GM13976 (cell line): ENCODE measurements at regions of chr14 and their contacts with region 1.

Region 1: GRCh38 chr14:51776102-51776894 is 84.1 kb upstream of the GNG2 start:
- DNase-seq: peak; percentile 77
- CTCF ChIP-seq: peak; percentile 52

Region 2: DNA sequence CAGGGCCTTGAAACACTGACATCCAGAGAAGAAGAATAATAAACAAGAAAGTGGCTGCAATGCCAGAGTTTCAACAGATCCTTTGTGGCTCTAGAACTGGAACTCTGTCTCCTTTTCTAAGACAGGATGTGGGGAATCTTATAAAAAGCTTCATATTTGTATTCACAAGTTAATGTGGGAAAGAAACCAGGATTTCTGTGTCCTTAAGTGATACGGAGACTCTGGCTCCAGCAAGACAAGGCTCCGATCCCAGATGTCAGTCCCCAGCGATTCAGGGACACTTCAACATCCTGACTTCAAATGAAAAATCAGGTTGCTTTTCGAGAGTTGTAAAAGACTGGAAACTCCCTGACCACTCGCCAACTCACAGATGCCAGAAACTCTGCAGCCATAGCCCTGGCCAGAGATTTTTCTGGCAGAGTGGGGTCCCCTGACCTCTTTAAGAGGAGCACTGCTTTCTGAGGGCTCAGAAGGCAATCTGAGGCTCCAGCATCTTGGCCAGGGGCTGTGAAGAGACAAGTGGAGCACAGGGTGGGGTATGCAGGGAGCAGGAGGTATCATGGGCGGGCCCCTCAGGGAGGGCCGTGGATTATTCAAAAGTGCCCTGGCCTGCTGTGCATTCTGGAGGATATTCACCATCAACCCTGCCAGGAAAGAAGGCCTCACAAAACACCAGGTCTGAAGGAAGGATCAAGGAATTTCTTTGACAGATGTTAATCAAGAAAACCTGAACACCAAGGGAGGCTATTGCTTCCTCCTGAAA is 483.0 kb before region 1 on chr14:
- in situ Hi-C with region 1: loop called (anchors 10 kb)
- DNase-seq: no peak
- CTCF ChIP-seq: no peak

Region 3: DNA sequence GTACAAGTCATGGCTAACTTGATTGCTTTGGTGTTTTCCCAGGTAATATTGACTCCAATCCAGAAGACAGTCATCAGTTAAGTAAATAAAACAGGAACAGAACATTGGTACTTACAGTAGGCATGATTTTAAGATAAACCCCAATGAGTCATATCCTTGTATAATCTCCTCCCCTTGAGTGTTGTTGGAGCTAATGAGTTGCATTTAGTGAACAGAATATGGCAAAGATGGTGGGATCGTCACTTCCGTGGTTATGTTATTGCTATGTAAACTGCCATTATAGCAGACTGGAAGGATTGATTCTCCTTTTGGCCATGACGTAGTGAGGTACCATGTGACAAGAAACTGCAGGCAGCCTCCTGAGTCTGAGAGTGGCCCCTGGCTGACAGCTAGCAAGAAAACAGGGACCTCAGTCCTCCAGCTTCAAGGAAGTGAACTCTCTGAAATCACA is 434.0 kb before region 1 on chr14:
- in situ Hi-C with region 1: no loop called
- DNase-seq: no peak
- CTCF ChIP-seq: no peak

Region 4: GRCh38 chr14:51616724-51617409 is 159.4 kb before region 1 on chr14:
- in situ Hi-C with region 1: no loop called
- DNase-seq: no peak
- CTCF ChIP-seq: no peak